SK-N-SH (cell line): ENCODE measurements at regions of chr2 and their contacts with region 1.

Region 1: GRCh38 chr2:9630749-9631483 is at the start of gene YWHAQ:
- DNase-seq: peak; percentile 100
- H3K4me3 ChIP-seq: peak within 1 kb of the TSS; percentile 84
- H3K27ac ChIP-seq: peak within 1 kb of the TSS; percentile 74 to 95
- H3K4me1 ChIP-seq: peaks cover 15 to 29% of the 10 kb centered on the region in 2 experiments; a peak in 3 of 4 replicates
- H3K27me3 ChIP-seq: no peaks in the 10 kb centered on the region
- CTCF ChIP-seq: no peak
- EP300 ChIP-seq: peak; percentile 45 to 46; a peak in 2 of 4 replicates
- RAD21 ChIP-seq: peak; percentile 33
- polyA plus RNA-seq, gene YWHAQ: 235 and 240 TPM in 2 replicates

Region 2: DNA sequence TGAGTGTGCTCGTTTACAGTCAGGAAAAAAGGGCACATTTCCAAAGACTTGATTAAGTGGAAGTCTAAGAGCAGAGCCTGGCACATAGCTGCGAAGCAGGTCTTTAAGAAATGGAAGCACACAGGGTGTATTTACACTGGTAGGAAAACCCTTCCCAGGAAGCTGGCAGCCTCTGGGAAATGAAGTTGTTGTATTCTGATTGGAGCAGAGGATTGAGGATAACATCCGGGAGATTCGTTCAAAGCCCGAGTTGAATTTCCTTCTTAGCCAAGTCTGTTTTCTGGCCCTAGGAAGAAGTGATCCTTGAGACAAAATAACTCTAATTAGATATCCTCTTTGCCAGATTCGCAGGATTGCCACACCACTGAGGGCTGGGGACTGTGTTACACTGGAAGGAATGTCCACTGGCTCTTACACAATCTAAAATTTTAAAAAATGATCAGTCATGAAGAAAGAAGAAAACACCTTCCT is 283.5 kb before region 1 on chr2:
- CTCF ChIA-PET with region 1: no interaction called
- POLR2A ChIA-PET with region 1: no interaction called
- DNase-seq: no peak
- H3K4me3 ChIP-seq: no peak overlapping the region
- H3K27ac ChIP-seq: no peak overlapping the region
- H3K4me1 ChIP-seq: no peaks in the 10 kb centered on the region; a peak in 1 of 4 replicates
- H3K27me3 ChIP-seq: no peaks in the 10 kb centered on the region
- CTCF ChIP-seq: no peak
- EP300 ChIP-seq: no peak
- RAD21 ChIP-seq: no peak

Region 3: DNA sequence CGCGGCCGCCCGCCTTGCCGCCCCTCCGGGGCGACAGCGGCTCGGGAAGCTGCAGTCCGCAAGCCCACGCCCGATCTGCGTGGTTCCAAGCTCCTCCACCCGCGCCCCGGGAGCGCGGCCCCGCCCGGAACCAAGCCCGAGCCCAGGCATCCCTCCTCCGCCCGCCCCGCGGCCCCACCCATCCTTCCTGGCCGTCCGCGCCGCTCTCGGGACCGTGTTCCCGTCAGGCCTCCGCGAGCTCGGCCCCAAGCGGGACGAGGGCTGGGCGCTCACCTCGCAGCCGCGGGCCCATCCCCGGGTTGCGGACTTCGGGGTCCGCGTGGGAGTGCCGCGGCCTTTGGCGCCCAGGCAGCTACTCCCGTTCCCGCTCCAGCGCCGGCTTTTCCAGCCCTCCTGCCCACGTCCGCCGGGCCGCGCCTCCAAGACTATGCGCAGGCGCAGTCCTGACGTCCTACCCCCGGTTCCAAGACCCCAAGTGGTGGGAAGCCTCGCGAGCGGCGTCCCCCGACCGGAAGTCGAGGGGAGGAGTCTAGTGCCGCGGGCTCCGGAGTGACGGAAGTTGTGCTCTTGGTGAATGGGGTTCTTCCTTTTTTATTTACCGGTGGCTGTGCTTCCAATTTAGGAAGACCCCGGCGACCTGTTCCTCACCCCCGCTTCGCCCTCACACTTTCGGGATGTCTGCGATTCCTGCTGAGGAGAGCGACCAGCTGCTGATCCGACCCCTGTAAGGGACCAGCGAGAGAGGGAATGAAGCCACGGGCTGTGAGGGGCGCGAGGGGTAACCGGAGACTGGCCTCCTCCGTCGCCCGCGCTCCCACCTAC is 207.6 kb before region 1 on chr2 and contains the starts of genes CPSF3 and ITGB1BP1:
- CTCF ChIA-PET with region 1: no interaction called
- POLR2A ChIA-PET with region 1: interaction called, 11 read pairs
- DNase-seq: peak; percentile 100
- H3K4me3 ChIP-seq: peak within 1 kb of the TSS; percentile 99 to 100
- H3K27ac ChIP-seq: peak within 1 kb of the TSS; percentile 81 to 91
- H3K4me1 ChIP-seq: peaks cover 24 to 33% of the 10 kb centered on the region in 2 experiments; a peak in 3 of 4 replicates
- H3K27me3 ChIP-seq: no peaks in the 10 kb centered on the region
- CTCF ChIP-seq: no peak
- EP300 ChIP-seq: 0 out of 4 replicates have a peak, but pooled peaks of 1 of the 2 experiments have one; percentile 39
- RAD21 ChIP-seq: no peak
- polyA plus RNA-seq, gene CPSF3: 31.4 and 34.2 TPM in 2 replicates
- polyA plus RNA-seq, gene ITGB1BP1: 56.6 and 62.3 TPM in 2 replicates

Region 4: GRCh38 chr2:9578467-9579235 is 52.3 kb before region 1 on chr2:
- CTCF ChIA-PET with region 1: no interaction called
- POLR2A ChIA-PET with region 1: interaction called, 10 read pairs
- DNase-seq: no peak
- H3K4me3 ChIP-seq: no peak overlapping the region
- H3K27ac ChIP-seq: no peak overlapping the region
- H3K4me1 ChIP-seq: peaks cover 0 to 8% of the 10 kb centered on the region in 2 experiments; a peak in 1 of 4 replicates
- H3K27me3 ChIP-seq: no peaks in the 10 kb centered on the region
- CTCF ChIP-seq: no peak
- EP300 ChIP-seq: no peak
- RAD21 ChIP-seq: no peak

Region 5: DNA sequence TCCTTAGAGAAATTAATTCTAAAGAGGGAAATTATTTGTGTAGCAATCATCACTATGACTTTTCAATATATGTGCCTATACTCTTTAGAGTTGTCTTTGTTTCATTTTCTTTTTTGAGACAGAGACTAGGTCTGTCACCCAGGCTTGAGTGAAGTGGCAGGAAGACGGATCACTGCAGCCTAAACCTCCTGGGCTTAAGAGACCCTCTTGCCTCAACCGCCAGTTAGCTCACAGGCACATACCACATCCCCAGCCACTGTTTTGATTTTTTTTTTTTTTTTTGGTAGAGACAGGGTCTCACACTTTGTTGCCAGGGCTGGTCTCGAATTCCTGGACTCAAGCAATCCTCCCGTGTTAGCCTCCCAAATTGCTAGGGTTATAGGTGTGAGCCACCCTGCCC is 12.5 kb before region 1 on chr2:
- CTCF ChIA-PET with region 1: interaction called, 7 read pairs
- POLR2A ChIA-PET with region 1: interaction called, 31 read pairs
- DNase-seq: no peak
- H3K4me3 ChIP-seq: no peak overlapping the region
- H3K27ac ChIP-seq: no peak overlapping the region
- H3K4me1 ChIP-seq: peaks cover 7 to 25% of the 10 kb centered on the region in 2 experiments
- H3K27me3 ChIP-seq: no peaks in the 10 kb centered on the region
- CTCF ChIP-seq: no peak
- EP300 ChIP-seq: no peak
- RAD21 ChIP-seq: no peak

Region 6: DNA sequence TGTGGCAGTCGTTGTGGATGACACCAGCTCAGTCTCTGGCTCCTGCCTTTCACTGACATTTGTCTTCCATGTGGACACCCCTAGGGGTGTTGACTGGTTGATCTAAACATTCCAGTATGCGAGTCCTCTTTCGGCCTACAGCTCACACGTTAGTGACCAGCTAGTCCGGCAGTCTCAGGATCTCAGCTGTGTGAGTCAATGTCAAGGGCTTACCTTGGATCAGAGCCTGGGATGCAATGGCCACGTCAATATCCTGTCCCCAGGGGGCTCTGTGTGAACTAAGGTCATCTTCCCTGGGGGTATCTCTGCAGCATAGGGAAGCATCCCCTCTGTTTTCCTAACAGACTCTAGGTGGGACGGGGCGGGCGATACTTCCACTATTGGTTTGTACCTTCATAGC is 35.0 kb after region 1 on chr2:
- CTCF ChIA-PET with region 1: no interaction called
- POLR2A ChIA-PET with region 1: no interaction called
- DNase-seq: no peak
- H3K4me3 ChIP-seq: no peak overlapping the region
- H3K27ac ChIP-seq: peak overlapping the region in 1 of 2 experiments; percentile 90; a peak in 2 of 4 replicates
- H3K4me1 ChIP-seq: peaks cover 4 to 23% of the 10 kb centered on the region in 2 experiments; a peak in 3 of 4 replicates
- H3K27me3 ChIP-seq: no peaks in the 10 kb centered on the region
- CTCF ChIP-seq: no peak; the same call in 1 of the 2 replicates
- EP300 ChIP-seq: peak in 1 of 2 experiments; percentile 69; a peak in 2 of 4 replicates
- RAD21 ChIP-seq: no peak

Region 7: GRCh38 chr2:9843229-9844035 is 212.5 kb after region 1 on chr2 and contains the start of gene TAF1B:
- CTCF ChIA-PET with region 1: interaction called, 3 read pairs
- POLR2A ChIA-PET with region 1: interaction called, 14 read pairs
- DNase-seq: peak; percentile 99
- H3K4me3 ChIP-seq: peak within 1 kb of the TSS; percentile 60 to 86
- H3K27ac ChIP-seq: peak within 1 kb of the TSS; percentile 89 to 95
- H3K4me1 ChIP-seq: peaks cover 15 to 20% of the 10 kb centered on the region in 2 experiments
- H3K27me3 ChIP-seq: no peaks in the 10 kb centered on the region
- CTCF ChIP-seq: peak; percentile 43
- EP300 ChIP-seq: no peak
- RAD21 ChIP-seq: no peak
- polyA plus RNA-seq, gene TAF1B: 7.8 and 8.3 TPM in 2 replicates